ENCODE measurements at regions of chrX and their contacts with region 1.

Region 1: GRCh38 chrX:146396409-146396808 is 413.2 kb upstream of the CXorf51B start:
- DNase-seq: no peak
- ATAC-seq: no peak
- H3K4me3 ChIP-seq: no peak overlapping the region
- H3K27ac ChIP-seq: no peak overlapping the region
- H3K4me1 ChIP-seq: no peaks in the 10 kb centered on the region
- H3K27me3 ChIP-seq: no peaks in the 10 kb centered on the region
- CTCF ChIP-seq: no peak

Region 2: DNA sequence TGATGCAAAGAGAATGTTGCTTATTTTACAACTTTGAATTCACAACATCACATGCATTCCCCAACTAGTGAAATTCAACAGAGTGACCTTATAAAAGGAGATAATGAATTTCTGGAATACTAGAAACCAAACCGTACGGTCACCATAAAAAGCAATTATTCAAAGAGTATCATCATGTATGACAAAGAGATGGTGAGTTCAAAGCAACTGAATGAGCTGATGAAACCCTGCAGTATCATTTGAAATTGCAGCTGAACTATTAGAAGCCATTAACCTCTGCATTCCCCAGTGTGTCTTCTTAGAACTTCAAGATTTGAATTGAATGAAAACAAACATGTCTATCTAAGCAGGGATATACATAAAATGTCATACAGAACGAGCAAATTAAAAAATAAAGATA is 406.4 kb before region 1 on chrX:
- intact Hi-C with region 1: loop called in 1 of 10 experiments (anchors 10 kb)
- DNase-seq: no peak
- ATAC-seq: no peak
- H3K4me3 ChIP-seq: no peak overlapping the region
- H3K27ac ChIP-seq: no peak overlapping the region
- H3K4me1 ChIP-seq: no peaks in the 10 kb centered on the region
- H3K27me3 ChIP-seq: no peaks in the 10 kb centered on the region
- CTCF ChIP-seq: no peak

Region 3: GRCh38 chrX:146036000-146036399 is 360.4 kb before region 1 on chrX:
- intact Hi-C with region 1: no loop called
- DNase-seq: no peak
- ATAC-seq: no peak
- H3K4me3 ChIP-seq: no peak overlapping the region
- H3K27ac ChIP-seq: no peak overlapping the region
- H3K4me1 ChIP-seq: no peaks in the 10 kb centered on the region
- H3K27me3 ChIP-seq: no peaks in the 10 kb centered on the region
- CTCF ChIP-seq: no peak

Region 4: DNA sequence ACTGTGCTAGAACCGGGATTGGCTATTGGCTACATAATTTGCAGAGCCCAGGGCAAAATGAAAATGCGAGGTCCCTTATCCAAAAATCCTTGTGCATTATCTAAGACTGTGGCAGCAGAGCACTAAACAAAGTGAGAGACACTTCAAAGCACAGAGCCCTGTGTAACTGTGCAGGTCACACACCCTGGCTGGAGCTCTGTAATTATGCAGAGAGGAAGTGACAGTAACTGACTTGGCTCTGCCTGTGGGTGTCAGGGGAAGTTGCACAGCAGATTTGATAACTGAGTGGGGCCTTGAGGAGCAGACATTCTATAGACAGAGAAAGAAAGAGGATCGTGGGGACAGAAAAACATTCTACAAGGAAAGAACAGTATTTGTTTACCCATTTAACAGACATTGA is 1341.9 kb after region 1 on chrX:
- intact Hi-C with region 1: no loop called
- DNase-seq: no peak
- ATAC-seq: no peak
- H3K4me3 ChIP-seq: no peak overlapping the region
- H3K27ac ChIP-seq: no peak overlapping the region
- H3K4me1 ChIP-seq: no peaks in the 10 kb centered on the region
- H3K27me3 ChIP-seq: no peaks in the 10 kb centered on the region
- CTCF ChIP-seq: no peak